Heart right ventricle (tissue), 16 donors: ENCODE measurements at regions of chr10 and their contacts with region 1.

Region 1: DNA sequence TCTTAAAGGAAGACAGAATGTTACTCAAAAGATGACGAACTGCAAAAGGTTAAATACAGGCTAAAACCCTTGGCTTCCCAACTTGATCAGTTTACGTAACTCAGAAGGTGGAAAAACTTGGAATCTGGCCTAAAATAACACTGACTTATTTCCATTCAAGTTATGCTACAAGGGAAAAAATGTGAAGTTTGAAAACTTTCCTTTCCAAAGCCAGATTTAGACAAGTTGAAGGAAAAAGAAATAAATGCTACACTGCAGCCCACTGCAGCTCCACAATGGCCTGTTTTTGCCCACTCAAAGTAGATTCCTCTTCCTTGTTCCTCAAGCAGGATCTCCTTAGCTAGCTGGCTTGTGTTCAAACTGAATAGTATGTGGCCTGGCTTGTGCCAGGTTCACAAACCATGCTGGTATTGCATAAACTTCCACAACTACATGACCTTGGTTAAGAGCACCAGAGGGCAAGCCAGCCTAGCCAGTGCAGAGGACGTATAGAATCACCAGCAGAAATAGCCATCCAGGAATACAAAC is 166.2 kb downstream of the CPEB3 start:
- DNase-seq: peak in 1 of 2 donors; percentile 12
- ATAC-seq: peak; percentile 33 to 78 (median 56)
- H3K4me3 ChIP-seq: no peak overlapping the region
- H3K27ac ChIP-seq: peak overlapping the region; percentile 48 to 84 (median 76)
- H3K4me1 ChIP-seq: peaks cover 21 to 68% (median 61%) of the 10 kb centered on the region in 9 donors
- H3K27me3 ChIP-seq: no peaks in the 10 kb centered on the region
- CTCF ChIP-seq: no peak

Region 2: DNA sequence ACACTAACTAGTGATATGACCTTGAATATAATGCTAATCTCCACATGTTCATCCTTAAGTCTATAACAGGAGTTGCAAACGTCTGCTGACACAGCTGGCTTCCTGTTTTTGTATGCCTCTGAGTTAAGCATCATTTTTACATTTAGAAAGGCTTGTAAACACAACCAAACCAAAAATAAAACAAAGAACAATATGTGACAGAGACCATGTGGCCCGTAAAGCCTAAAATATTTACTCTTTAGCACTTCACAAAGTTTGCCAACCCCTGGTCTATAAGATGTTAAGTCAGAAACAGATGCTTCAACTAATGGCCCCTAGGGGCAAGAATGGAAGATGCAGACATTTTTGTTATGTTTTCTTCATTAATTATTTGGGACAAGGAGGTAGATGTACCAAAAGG is 56.9 kb after region 1 on chr10:
- intact Hi-C with region 1: loop called in 1 of 10 experiments (anchors 10 kb)
- DNase-seq: no peak
- ATAC-seq: peak in 2 of 8 donors; percentile 27 to 49
- H3K4me3 ChIP-seq: no peak overlapping the region
- H3K27ac ChIP-seq: no peak overlapping the region
- H3K4me1 ChIP-seq: peaks cover 0 to 23% (median 9%) of the 10 kb centered on the region in 9 donors
- H3K27me3 ChIP-seq: no peaks in the 10 kb centered on the region
- CTCF ChIP-seq: peak in 5 of 9 donors; percentile 12 to 31 (median 23)